ENCODE measurements at regions of chr12 and their contacts with region 1.

Region 1: DNA sequence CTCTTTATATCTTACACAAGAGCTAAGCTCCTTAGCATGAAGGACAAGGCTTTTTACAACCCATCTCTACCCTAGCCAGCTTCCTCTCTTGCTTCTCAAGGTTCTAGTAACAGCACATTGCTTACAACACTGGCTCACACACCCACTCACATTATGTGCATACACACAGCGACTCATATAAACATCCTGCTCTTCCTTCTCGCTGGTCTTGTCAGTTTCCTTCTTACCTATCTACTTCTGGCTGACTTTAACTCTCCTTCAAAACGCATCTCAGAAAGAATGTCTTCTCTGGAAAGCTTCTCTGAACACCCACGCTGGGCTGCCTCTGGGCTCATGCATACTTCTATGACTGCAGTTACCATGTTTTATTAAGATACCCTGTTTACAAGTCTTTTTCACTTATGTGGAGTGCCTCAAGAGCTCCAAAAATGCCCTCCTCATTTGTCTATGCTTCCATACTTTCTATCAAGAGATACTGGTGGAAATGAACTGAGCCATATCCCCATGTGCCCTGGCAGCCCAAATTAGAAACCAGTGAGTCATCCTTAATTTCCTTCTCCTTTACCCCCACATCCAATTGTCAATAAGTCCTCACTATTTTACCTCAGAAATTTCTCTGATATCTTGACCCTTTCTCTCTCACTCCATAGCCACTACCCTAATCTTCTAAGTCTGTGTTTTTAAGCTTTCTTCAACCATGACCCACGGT is 126.9 kb upstream of the KRAS start:
- DNase-seq: peak; percentile 75
- H3K4me3 Mint-ChIP-seq: peak overlapping the region; percentile 8
- H3K27ac Mint-ChIP-seq: peak overlapping the region; percentile 54
- H3K4me1 Mint-ChIP-seq: peaks cover 54% of the 10 kb centered on the region
- H3K27me3 Mint-ChIP-seq: no peaks in the 10 kb centered on the region

Region 2: DNA sequence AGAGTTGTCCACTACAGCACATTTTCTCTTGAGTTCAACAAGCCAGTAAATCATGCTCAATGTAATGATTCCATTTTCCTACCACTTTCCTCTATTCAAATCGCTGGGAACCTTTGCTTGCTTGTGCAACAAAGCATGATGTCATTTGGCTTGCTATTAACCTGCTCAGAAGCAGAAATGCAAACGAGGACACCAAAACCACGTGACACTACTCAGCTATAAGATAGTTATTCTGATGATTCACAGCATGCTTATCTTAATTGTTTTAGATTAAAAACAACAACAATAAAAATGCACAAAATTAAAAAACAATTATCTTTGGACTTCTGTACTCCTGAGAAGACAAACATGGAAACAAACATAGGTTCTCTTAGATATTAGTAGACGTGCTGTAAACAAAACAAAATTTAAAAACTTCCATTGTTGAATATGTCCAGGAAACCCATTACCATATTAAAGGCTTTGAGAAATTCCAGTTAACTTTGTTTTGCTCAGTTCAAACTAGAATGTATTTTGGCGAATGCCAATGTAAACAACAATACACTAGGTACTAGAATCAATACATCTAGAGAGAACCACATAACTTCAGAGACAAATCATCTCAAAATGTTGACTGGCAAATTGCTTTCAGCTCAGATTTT is 49.4 kb before region 1 on chr12:
- CTCF ChIA-PET with region 1: interaction called, 3 read pairs
- intact Hi-C with region 1: loop called (anchors 1 kb)
- DNase-seq: peak; percentile 20
- H3K4me3 Mint-ChIP-seq: no peak overlapping the region
- H3K27ac Mint-ChIP-seq: no peak overlapping the region
- H3K4me1 Mint-ChIP-seq: peaks cover 32% of the 10 kb centered on the region
- H3K27me3 Mint-ChIP-seq: no peaks in the 10 kb centered on the region

Region 3: GRCh38 chr12:25352083-25352918 is 25.3 kb before region 1 on chr12:
- CTCF ChIA-PET with region 1: no interaction called
- intact Hi-C with region 1: no loop called
- DNase-seq: no peak
- H3K4me3 Mint-ChIP-seq: no peak overlapping the region
- H3K27ac Mint-ChIP-seq: no peak overlapping the region
- H3K4me1 Mint-ChIP-seq: peaks cover 6% of the 10 kb centered on the region
- H3K27me3 Mint-ChIP-seq: no peaks in the 10 kb centered on the region

Region 4: GRCh38 chr12:25364529-25365339 is 12.9 kb before region 1 on chr12:
- CTCF ChIA-PET with region 1: interaction called, 12 read pairs
- intact Hi-C with region 1: loop called (anchors 1 kb)
- DNase-seq: peak; percentile 82
- H3K4me3 Mint-ChIP-seq: peak overlapping the region; percentile 39
- H3K27ac Mint-ChIP-seq: peak overlapping the region; percentile 56
- H3K4me1 Mint-ChIP-seq: peaks cover 15% of the 10 kb centered on the region
- H3K27me3 Mint-ChIP-seq: peaks cover 5% of the 10 kb centered on the region

Measured in activated naive CD4-positive, alpha-beta T cell treated with anti-CD3 and anti-CD28 coated beads for 36 hours (primary cell).